ENCODE measurements at regions of chr21 and their contacts with region 1.

Region 1: GRCh38 chr21:43825681-43826622 is 36.6 kb downstream of the RRP1 start:
- DNase-seq: no peak
- H3K4me3 ChIP-seq: no peak overlapping the region
- H3K27ac ChIP-seq: no peak overlapping the region
- H3K4me1 ChIP-seq: peaks cover 0 to 31% (median 3%) of the 10 kb centered on the region in 3 donors
- H3K27me3 ChIP-seq: peaks cover 0 to 17% (median 0%) of the 10 kb centered on the region in 4 donors
- CTCF ChIP-seq: peak in 1 of 6 experiments; percentile 22
- POLR2A ChIP-seq: no peak

Region 2: GRCh38 chr21:43352568-43353281 is 473.2 kb before region 1 on chr21:
- intact Hi-C with region 1: no loop called
- DNase-seq: no peak
- H3K4me3 ChIP-seq: no peak overlapping the region
- H3K27ac ChIP-seq: peak overlapping the region in 1 of 4 donors; percentile 27
- H3K4me1 ChIP-seq: peaks cover 0 to 26% (median 5%) of the 10 kb centered on the region in 3 donors
- H3K27me3 ChIP-seq: no peaks in the 10 kb centered on the region
- CTCF ChIP-seq: no peak
- POLR2A ChIP-seq: peak in 1 of 4 donors; percentile 42

Region 3: GRCh38 chr21:43874085-43874785 is 48.3 kb after region 1 on chr21:
- intact Hi-C with region 1: loop called (anchors 10 kb)
- DNase-seq: no peak
- H3K4me3 ChIP-seq: no peak overlapping the region
- H3K27ac ChIP-seq: peak overlapping the region in 2 of 4 donors; percentile 15 to 21
- H3K4me1 ChIP-seq: peaks cover 0 to 43% (median 4%) of the 10 kb centered on the region in 3 donors
- H3K27me3 ChIP-seq: no peaks in the 10 kb centered on the region
- CTCF ChIP-seq: no peak
- POLR2A ChIP-seq: no peak

Region 4: DNA sequence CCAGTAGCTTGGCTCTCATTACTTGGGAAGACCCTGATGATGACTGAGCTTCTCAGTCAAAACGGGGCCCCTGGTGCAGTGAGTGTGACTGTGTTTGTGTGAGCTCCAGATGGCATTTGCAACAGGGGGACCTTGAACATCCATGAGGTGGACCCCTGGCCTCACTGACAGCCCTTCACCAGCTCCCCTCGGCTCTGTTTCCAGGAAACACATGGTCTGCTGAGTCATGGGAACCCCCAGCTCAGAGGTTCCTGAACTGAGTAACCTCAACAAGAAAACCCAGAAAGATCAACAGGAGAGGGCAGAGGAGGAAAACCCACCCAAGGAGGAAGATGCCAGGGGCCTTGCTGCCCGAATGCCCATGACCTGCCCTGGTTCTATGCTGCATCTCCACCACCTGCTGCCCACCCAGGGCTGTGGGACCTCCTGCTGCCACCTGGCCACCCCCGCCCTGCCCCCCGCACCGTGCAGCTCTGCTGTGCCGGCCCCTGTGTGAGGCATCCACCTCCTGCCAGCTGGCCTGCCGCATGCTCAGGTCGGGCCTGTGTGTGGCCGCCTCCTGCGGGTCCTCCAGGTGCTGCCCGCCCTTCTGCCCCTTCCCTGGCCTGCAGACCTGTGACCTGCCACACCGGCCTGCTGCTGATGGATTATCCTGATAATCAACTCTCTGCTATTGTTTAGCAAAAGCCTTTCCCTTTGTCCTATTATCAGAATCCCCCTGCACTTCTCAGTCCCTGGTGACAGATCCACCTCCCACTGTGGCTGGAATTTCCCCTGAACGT is 860.2 kb after region 1 on chr21:
- intact Hi-C with region 1: no loop called
- DNase-seq: no peak
- H3K4me3 ChIP-seq: no peak overlapping the region
- H3K27ac ChIP-seq: no peak overlapping the region
- H3K4me1 ChIP-seq: no peaks in the 10 kb centered on the region
- H3K27me3 ChIP-seq: peaks cover 0 to 72% (median 0%) of the 10 kb centered on the region in 4 donors
- CTCF ChIP-seq: no peak
- POLR2A ChIP-seq: no peak